H1 (cell line): ENCODE measurements at regions of chr7 and their contacts with region 1.

Region 1: DNA sequence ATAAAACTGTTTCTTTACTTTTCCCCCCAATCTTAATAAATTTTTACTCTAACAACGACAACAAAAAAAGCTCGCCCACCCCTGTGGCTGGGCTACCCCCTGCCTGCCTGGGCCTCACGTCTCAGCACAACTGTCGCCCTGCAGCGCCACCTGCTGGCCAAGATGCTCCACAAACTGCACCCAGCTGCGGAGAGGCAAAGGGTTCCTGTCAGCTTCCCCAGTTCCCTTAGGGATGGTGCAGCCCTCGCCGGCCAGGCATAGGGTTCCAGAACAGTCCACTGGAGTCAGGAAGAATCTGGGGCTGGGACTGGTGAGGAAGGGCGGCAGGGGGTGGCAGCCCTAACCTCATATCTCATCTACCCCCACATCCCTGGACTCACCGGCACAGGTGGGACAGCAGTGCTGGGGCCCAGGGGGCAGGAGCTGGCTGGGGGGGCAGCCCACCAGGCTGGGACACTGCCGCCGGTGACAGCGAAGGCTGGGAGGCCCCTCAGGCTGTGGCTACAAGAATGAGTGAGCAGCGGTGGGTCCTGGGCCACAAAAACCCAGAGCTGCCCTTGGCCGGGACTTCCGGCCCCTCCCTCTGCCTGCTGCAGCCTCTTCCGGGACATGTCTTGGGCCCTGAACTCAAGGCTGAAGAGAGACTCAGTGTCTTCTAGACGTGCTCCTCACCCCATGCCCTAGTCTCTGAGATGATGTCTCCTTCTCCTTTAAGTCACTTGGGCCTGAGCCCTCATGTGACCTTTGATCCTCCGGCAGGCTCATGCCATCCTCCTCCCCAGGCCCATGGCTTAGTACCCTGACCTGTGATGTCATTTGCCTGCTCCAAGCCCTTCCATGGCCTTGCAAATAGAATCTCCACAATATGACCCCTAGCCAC is 21.2 kb downstream of the ATP6V1F start:
- DNase-seq: peak; percentile 73 to 99
- H3K4me3 ChIP-seq: no peak overlapping the region
- H3K27ac ChIP-seq: no peak overlapping the region
- H3K4me1 ChIP-seq: peaks cover 0 to 14% (median 9%) of the 10 kb centered on the region in 4 experiments; a peak in 5 of 7 replicates
- H3K27me3 ChIP-seq: no peaks in the 10 kb centered on the region
- CTCF ChIP-seq: peak in 2 of 3 experiments; percentile 92 to 94; a peak in 3 of 4 replicates
- EP300 ChIP-seq: no peak
- POLR2A ChIP-seq: no peak
- RAD21 ChIP-seq: peak; percentile 86 to 89

Region 2: DNA sequence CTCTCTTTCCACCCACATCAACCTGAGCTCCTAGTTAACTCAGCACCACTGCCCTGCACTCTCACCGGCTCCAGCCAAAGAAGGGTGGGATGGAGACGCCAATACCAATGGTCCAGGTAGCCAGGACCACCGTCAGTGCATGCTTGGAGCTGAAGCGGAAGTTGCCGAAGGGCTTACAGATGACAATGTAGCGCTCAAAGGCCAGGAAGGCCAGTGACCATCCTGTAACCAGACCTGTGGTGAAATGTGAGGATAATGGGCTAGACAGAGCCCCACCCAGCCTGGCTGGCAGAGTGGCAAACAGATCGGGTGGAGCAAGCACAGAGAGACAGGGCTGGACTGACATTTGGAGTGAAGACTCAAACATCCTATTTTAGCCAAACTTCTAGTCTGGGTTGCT is 108.9 kb before region 1 on chr7:
- CTCF ChIA-PET with region 1: interaction called, 12 read pairs
- POLR2A ChIA-PET with region 1: no interaction called
- DNase-seq: no peak
- H3K4me3 ChIP-seq: no peak overlapping the region
- H3K27ac ChIP-seq: no peak overlapping the region
- H3K4me1 ChIP-seq: no peaks in the 10 kb centered on the region
- H3K27me3 ChIP-seq: no peaks in the 10 kb centered on the region
- CTCF ChIP-seq: no peak
- EP300 ChIP-seq: no peak
- POLR2A ChIP-seq: no peak
- RAD21 ChIP-seq: no peak

Region 3: DNA sequence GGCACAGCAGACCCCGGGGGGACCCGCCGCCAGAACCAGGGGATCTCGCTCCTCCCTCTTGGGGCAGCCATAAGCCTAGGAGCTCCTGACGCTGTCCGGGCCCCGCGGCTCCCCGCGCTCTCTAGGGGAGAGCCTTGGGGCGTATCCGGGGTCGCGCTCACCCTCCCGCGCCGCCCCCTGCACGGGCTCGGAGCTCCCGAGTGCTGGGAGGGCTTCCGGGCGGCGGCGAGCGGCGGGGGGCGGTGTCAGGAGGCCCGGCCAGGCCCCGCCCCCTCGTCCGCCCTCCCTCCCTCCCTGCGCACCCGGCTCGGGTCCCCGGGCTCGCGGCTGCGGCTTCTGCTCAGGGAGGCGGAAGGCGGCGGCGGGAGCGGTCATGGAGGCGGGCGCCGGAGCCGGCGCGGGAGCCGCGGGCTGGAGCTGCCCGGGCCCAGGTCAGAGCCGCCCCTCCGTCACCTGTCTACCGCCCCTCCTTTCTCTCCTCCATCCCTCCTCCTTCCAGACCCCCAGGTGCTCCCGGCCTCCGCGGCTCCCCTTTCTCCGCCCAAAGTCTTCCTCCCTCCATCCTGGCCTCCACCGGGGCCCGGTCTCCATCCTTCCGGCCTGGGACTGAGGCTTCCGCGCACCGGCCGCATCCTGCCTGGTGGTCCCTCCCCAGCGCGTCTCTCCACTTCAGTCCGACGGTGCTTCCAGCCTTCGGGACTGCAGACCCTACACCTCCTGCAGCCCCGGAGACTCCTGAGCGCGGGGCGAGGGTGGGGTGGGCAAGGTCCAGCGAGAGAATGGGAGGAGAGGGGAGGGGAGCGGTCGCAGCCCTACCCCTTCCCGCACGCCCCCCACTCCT is 92.5 kb before region 1 on chr7:
- CTCF ChIA-PET with region 1: interaction called, 42 read pairs
- POLR2A ChIA-PET with region 1: no interaction called
- DNase-seq: peak in 1 of 2 experiments; percentile 86
- H3K4me3 ChIP-seq: peak overlapping the region; percentile 73 to 100 (median 80)
- H3K27ac ChIP-seq: no peak overlapping the region
- H3K4me1 ChIP-seq: peaks cover 6 to 11% (median 8%) of the 10 kb centered on the region in 4 experiments
- H3K27me3 ChIP-seq: no peaks in the 10 kb centered on the region; a peak in 1 of 7 replicates
- CTCF ChIP-seq: no peak
- EP300 ChIP-seq: no peak
- POLR2A ChIP-seq: peak in 1 of 2 experiments; percentile 22; a peak in 1 of 3 replicates
- RAD21 ChIP-seq: no peak

Region 4: DNA sequence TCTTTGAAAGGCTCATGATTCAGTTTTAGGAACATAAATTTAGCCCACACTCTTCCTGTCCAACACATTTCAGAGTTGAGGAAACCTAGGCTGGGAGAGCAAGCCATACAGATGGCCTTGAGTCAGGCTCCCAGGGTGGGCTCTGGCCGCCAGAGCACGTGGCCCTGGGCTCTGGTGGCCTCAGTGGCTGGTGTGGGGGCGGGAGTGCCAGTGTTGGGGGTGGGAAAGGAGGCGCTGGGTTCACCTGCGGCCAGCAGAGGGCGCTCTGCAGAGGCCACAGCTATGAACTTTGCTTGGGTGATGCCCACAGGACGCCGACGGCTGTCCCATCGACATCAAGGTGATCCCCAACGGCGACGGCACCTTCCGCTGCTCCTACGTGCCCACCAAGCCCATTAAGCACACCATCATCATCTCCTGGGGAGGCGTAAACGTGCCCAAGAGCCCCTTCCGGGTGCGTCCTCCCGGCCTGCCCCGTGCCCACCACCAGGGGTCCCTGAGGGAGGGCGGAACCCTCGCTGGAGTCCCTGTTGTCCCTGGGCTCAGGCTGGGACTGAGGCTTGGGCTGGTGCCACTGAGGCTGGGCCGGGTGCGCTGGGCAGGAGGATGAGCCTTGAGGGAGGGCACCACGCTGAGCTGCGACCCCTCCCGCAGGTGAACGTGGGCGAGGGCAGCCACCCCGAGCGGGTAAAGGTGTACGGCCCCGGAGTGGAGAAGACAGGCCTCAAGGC is 41.8 kb before region 1 on chr7:
- CTCF ChIA-PET with region 1: interaction called, 80 read pairs
- POLR2A ChIA-PET with region 1: interaction called, 3 read pairs
- DNase-seq: peak in 1 of 2 experiments; percentile 88
- H3K4me3 ChIP-seq: no peak overlapping the region
- H3K27ac ChIP-seq: no peak overlapping the region
- H3K4me1 ChIP-seq: peaks cover 0 to 10% (median 5%) of the 10 kb centered on the region in 4 experiments; a peak in 6 of 7 replicates
- H3K27me3 ChIP-seq: no peaks in the 10 kb centered on the region; a peak in 1 of 7 replicates
- CTCF ChIP-seq: peak in 2 of 3 experiments; percentile 71 to 74; a peak in 3 of 4 replicates
- EP300 ChIP-seq: no peak; a peak in 1 of 3 replicates
- POLR2A ChIP-seq: no peak
- RAD21 ChIP-seq: peak; percentile 33 to 53; a peak in 3 of 4 replicates

Region 5: GRCh38 chr7:128862571-128863432 is 21.1 kb before region 1 on chr7 and contains the start of gene ATP6V1F:
- CTCF ChIA-PET with region 1: interaction called, 189 read pairs
- POLR2A ChIA-PET with region 1: interaction called, 22 read pairs
- DNase-seq: peak; percentile 97 to 100
- H3K4me3 ChIP-seq: peak within 1 kb of the TSS; percentile 74 to 92 (median 78)
- H3K27ac ChIP-seq: no peak within 1 kb of the TSS
- H3K4me1 ChIP-seq: peaks cover 0 to 12% (median 5%) of the 10 kb centered on the region in 4 experiments; a peak in 5 of 7 replicates
- H3K27me3 ChIP-seq: peaks cover 0 to 2% (median under 1%) of the 10 kb centered on the region in 4 experiments; a peak in 3 of 7 replicates
- CTCF ChIP-seq: no peak
- EP300 ChIP-seq: no peak
- POLR2A ChIP-seq: peak in 1 of 2 experiments; percentile 49; a peak in 2 of 3 replicates
- RAD21 ChIP-seq: no peak
- total RNA-seq, gene ATP6V1F: 104 TPM in 2 replicates

Region 6: GRCh38 chr7:128909625-128910257 is 25.9 kb after region 1 on chr7:
- CTCF ChIA-PET with region 1: interaction called, 10 read pairs
- POLR2A ChIA-PET with region 1: interaction called, 4 read pairs
- DNase-seq: peak in 1 of 2 experiments; percentile 71
- H3K4me3 ChIP-seq: peak overlapping the region; percentile 37 to 67 (median 52)
- H3K27ac ChIP-seq: no peak overlapping the region
- H3K4me1 ChIP-seq: peaks cover 4 to 35% (median 20%) of the 10 kb centered on the region in 4 experiments
- H3K27me3 ChIP-seq: peaks cover 12 to 52% (median 37%) of the 10 kb centered on the region in 4 experiments
- CTCF ChIP-seq: no peak
- EP300 ChIP-seq: no peak
- POLR2A ChIP-seq: no peak
- RAD21 ChIP-seq: no peak

Region 7: DNA sequence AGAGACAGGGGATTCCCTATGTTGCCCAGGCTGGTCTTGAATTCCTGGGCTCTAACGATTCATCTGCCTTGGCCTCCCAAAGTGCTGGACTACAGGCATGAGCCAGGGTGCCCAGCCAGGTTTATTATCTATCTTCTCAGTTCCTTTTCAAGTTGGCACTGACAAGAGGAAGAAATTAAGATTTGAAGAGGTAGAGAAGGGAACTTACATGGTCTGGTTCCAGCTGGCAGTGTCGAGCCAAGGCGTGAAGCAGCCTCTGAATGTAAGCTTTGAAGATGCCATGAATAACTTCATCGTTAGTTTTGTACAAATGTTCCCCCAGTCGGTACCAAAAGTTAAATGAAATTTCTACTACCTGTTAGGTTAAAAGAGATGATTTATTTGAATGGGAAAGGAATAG is 113.3 kb after region 1 on chr7:
- CTCF ChIA-PET with region 1: no interaction called
- POLR2A ChIA-PET with region 1: no interaction called
- DNase-seq: no peak
- H3K4me3 ChIP-seq: no peak overlapping the region
- H3K27ac ChIP-seq: no peak overlapping the region
- H3K4me1 ChIP-seq: no peaks in the 10 kb centered on the region
- H3K27me3 ChIP-seq: no peaks in the 10 kb centered on the region
- CTCF ChIP-seq: no peak
- EP300 ChIP-seq: no peak
- POLR2A ChIP-seq: no peak
- RAD21 ChIP-seq: no peak